PC-9 (cell line): ENCODE measurements at regions of chr11 and their contacts with region 1.

Region 1: DNA sequence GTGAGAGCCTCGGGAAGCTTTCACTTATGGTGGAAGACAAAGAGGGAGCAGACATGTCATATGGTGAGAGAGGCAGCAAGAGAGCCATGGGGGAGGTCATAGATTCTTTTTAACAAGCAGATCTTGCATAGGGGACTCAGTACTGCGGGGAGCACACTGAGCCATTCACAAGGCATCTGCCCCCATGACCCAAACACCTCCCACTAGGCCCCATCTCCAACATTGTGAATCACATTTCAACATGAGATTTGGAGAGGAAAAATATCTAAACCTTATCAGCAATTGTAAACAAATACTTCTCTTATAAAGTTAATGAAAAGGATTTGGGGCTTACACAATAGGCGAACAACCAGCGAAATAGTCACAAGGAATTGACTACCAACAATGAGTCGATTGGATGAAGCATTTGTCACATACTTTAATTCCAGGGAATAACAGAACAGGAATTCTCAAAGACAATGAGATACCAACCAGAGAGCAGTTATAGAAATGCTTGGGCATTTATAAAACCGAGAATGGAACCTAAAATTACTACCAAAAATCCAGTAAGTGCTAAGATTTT is 7.3 kb downstream of the DDI1 start:
- DNase-seq: no peak
- H3K4me3 ChIP-seq: no peak overlapping the region
- H3K27ac ChIP-seq: no peak overlapping the region
- H3K4me1 ChIP-seq: no peaks in the 10 kb centered on the region
- H3K27me3 ChIP-seq: no peaks in the 10 kb centered on the region
- CTCF ChIP-seq: no peak

Region 2: DNA sequence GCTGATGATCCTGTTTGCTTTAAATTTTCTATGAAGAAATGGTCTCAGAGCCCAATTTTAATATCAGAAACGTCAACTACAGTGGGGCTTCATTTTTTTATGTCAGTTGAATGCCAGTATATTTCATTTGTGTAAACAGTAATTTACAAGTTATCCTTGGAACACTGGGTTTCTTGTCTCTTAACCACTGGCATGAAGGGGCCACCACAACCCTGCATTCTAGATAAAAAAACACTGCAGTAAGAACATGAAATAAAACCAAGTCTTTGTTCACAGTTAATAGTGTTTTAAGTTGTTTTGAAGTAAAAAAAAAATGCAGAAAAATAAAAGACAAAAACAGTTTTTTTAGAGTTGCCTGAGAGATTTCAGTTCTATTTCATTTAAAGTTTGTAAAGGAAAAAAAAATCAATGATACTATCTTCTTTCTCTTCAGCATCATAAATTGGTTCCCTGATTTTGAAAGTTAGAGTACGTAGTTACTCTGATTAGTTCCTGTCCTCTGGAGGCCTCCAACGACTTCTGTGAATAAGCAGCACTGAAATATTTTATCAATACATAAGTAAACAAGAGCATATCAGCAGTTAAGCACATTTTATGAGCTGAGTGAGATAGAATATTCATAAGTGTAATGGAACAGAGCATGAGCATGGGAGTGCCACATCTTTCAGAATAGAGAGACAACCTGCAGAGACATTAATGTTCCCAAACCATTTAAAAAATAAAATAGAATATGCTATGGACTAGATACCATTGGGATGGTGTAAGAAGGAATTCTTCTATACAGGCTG is 15.1 kb before region 1 on chr11:
- CTCF ChIA-PET with region 1: no interaction called
- POLR2A ChIA-PET with region 1: no interaction called
- intact Hi-C with region 1: loop called (anchors 1 kb)
- DNase-seq: no peak
- H3K4me3 ChIP-seq: no peak overlapping the region
- H3K27ac ChIP-seq: no peak overlapping the region
- H3K4me1 ChIP-seq: peaks cover 11% of the 10 kb centered on the region
- H3K27me3 ChIP-seq: no peaks in the 10 kb centered on the region
- CTCF ChIP-seq: no peak

Region 3: DNA sequence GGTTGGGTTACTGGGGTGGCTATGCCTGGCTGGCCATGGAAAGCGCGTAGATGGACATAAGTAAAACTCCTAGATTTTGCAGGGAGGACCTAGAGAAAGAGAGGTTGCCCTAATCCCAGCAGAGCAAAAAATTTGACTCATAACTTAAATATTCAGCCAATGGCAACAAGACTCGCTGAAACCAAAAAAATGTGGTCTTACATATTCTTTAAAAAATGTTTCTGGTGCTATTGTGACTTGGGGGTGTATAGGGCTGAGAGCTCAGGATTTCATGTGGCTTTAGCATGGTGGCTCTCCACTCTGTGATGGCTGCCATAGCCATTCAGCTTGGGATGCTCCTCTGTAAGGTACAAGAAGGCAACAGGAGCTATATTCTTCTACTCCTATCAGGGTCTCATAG is 147.4 kb after region 1 on chr11:
- CTCF ChIA-PET with region 1: no interaction called
- POLR2A ChIA-PET with region 1: no interaction called
- intact Hi-C with region 1: no loop called
- DNase-seq: no peak
- H3K4me3 ChIP-seq: no peak overlapping the region
- H3K27ac ChIP-seq: no peak overlapping the region
- H3K4me1 ChIP-seq: no peaks in the 10 kb centered on the region
- H3K27me3 ChIP-seq: no peaks in the 10 kb centered on the region
- CTCF ChIP-seq: no peak